Activated naive CD8-positive, alpha-beta T cell treated with anti-CD3 and anti-CD28 coated beads, Interleukin-2, amount 10 ng/mL, durations not matched to agents 7 days and 5 days (primary cell): ENCODE measurements at regions of chr19 and their contacts with region 1.

Region 1: GRCh38 chr19:46600384-46601317 is 479 bp upstream of the CALM3 start:
- DNase-seq: peak; percentile 99
- ATAC-seq: peak; percentile 87
- H3K4me3 Mint-ChIP-seq: peak overlapping the region; percentile 97
- H3K27ac Mint-ChIP-seq: peak overlapping the region; percentile 100
- H3K4me1 Mint-ChIP-seq: peaks cover 29% of the 10 kb centered on the region
- H3K27me3 Mint-ChIP-seq: peaks cover 2% of the 10 kb centered on the region

Region 2: GRCh38 chr19:46521241-46521868 is 79.3 kb before region 1 on chr19:
- POLR2A ChIA-PET with region 1: interaction called, 34 read pairs
- DNase-seq: no peak
- ATAC-seq: no peak
- H3K4me3 Mint-ChIP-seq: peak overlapping the region; percentile 4
- H3K27ac Mint-ChIP-seq: peak overlapping the region; percentile 77
- H3K4me1 Mint-ChIP-seq: peaks cover 44% of the 10 kb centered on the region
- H3K27me3 Mint-ChIP-seq: no peaks in the 10 kb centered on the region

Region 3: DNA sequence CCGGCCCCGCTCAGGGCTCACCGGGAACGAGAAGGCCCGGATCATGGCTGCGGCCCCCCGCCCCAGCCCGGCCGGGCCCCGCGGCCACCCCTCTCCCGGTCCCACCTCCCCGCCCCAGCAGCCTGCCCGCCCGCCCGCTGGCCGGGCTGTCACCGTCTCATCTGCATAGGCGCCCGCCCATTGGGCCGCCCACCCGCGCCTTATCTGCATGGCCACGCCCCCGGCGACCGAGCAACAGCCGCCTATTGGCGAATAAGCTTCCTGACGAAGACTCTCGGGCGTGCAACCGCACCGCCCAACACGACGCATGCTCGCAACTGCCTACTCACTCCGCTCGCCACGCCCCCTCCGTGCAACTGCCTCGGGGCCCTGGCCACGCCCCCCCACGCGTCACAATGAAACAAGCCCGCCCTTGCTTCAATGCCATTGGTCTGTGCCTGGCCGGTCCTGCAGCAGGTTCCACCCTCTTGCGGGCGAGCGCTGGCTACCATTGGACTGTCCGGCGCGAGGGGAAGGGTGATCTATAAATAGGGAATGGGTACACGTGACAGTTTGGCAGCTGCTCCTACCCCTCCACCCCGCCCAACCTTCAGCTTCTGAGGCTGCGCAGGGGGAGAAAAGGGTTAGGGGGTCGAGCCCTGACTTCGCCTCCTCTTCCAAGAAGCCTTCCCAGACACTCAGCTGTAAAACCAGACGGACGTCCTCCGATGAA is 60.5 kb after region 1 on chr19 and contains the start of gene DACT3:
- POLR2A ChIA-PET with region 1: interaction called, 24 read pairs
- DNase-seq: peak; percentile 100
- ATAC-seq: peak; percentile 92
- H3K4me3 Mint-ChIP-seq: peak within 1 kb of the TSS; percentile 83
- H3K27ac Mint-ChIP-seq: peak within 1 kb of the TSS; percentile 90
- H3K4me1 Mint-ChIP-seq: peaks cover 12% of the 10 kb centered on the region
- H3K27me3 Mint-ChIP-seq: peaks cover 32% of the 10 kb centered on the region
- total RNA-seq, gene DACT3: 0.42 to 0.48 TPM